ENCODE measurements at regions of chr3 and their contacts with region 1.

Region 1: DNA sequence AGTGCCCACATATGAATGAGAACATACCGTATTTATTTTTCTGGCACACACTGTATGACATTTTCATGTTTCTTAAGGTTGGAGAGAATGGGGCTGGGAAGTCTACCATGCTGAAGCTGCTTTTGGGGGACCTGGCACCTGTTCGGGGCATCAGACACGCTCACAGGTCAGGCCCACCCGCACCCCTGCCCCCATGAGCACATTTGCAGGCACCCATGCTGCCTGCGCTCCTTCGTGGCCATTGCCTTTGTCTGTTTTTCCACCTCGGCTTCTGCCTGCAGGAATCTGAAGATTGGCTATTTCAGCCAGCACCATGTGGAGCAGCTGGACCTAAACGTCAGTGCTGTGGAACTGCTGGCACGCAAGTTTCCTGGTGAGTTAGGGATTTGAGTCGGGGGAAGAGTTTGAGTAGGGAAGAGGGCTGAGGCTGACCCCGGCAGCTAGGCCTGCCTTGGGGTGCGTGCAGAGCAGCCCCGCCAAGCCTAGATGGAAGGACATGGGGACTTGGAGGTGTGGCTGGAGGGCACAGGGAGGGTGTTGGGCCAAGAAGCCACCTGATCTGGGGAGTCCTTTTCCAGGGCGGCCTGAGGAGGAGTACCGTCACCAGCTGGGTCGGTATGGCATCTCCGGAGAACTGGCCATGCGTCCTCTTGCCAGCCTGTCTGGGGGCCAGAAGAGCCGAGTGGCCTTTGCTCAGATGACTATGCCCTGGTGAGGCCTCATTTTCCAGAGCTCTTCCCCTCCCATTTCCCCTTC is 6.7 kb downstream of the ABCF3 start:
- DNase-seq: no peak
- H3K4me3 ChIP-seq: no peak overlapping the region
- H3K27ac ChIP-seq: peak overlapping the region in 2 of 5 donors; percentile 69 to 77
- H3K4me1 ChIP-seq: peaks cover 20 to 70% of the 10 kb centered on the region in 2 donors
- H3K27me3 ChIP-seq: no peaks in the 10 kb centered on the region
- CTCF ChIP-seq: no peak
- POLR2A ChIP-seq: no peak

Region 2: GRCh38 chr3:184235381-184236032 is 42.8 kb after region 1 on chr3:
- intact Hi-C with region 1: loop called in 1 of 2 experiments (anchors 5 kb)
- DNase-seq: no peak
- H3K4me3 ChIP-seq: no peak overlapping the region
- H3K27ac ChIP-seq: peak overlapping the region in 1 of 5 donors; percentile 78
- H3K4me1 ChIP-seq: peaks cover 11 to 44% of the 10 kb centered on the region in 2 donors
- H3K27me3 ChIP-seq: peaks cover 5% of the 10 kb centered on the region
- CTCF ChIP-seq: no peak
- POLR2A ChIP-seq: no peak

Measured in adrenal gland (tissue), 19 donors.